Head of caudate nucleus (tissue), 42 donors: ENCODE measurements at regions of chr5 and their contacts with region 1.

Region 1: GRCh38 chr5:78972654-78973428 is 12.3 kb downstream of the ARSB start:
- DNase-seq: peak in 17 of 42 donors; percentile 10 to 66 (median 30)

Region 2: DNA sequence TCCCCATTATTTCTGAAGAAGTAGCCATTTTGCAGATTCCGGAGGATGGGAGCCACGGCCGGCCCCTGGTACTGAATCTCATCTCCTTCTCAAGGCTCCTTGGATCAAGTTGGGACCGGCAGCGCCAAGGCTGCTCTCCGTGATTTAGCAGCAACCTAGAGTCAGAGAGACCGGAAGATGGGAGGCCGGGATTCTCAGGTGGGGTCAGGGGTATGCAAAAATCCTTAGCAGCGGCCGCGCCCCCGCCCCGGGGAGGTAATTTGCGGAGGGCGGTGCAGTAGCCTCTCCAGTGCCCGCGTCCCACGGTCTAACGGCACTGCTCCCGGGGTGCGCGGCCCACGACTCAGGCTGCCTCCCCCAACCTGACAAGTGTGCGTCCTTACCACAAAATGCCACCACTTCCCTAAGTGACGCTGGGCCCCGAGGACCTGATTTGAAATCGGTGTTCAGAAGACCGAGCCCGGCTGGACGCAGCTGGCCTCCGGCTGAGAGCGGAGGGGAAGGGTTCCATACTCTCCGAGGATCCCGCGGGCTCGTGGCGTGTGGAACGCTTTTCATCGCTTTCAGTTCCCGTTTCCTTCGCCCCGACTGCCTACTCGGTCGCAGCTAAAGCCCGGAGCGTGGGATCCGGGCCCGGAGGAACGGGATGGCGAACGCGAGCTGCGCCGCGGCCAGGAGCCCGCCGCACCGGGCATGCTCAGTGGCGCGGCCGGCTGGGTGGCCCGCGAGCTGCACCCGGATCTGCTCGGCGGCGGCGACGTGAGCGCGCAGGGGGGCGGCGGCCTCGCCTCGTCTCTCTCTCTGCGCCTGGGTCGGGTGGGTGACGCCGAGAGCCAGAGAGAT is 612.8 kb before region 1 on chr5 and contains the start of gene SCAMP1:
- intact Hi-C with region 1: loop called (anchors 10 kb)
- DNase-seq: peak; percentile 71 to 96 (median 91)

Region 3: DNA sequence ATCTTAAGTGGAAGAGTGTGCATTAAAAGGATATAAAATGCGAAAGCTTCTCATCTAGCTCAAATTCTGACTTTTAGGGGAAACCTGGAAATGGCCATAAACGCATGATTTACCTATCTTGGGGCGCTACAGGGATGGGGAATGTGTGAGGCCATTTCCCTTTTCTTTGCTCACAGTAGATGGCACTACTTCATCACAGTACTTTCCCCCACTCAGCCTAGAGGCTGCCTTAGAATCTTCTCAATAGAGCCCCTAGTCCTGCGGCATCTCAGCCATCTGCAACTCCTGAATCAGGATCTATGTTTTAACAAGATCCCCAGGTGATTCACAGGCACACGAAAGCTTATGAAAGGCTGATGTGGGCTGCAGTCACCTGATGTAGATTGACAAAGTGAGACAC is 435.0 kb before region 1 on chr5:
- intact Hi-C with region 1: loop called (anchors 5 kb)
- DNase-seq: peak in 32 of 42 donors; percentile 28 to 86 (median 60)

Region 4: DNA sequence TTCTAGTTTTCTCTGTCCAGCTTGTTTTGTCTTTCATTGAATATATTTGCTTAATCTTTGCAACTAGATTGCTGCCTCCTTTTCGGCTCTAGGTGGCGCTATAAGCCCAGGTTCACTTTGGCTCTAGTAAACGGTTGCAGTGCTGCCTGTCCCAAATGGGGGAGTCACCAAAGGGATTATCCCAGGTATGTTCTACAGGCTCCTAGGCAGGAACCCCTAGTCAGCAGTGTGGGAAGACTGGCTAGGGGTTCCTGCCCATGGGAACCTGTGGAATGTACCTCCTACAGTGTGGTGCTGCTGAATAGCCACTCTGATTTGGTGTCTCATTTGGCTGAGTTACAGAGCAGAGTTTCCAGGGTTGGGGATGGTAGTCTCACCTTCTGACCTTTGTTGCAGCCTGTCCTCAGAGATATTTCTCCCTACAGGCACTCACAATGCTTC is 72.9 kb before region 1 on chr5:
- intact Hi-C with region 1: loop called (anchors 10 kb)
- DNase-seq: peak in 12 of 42 donors; percentile 19 to 69 (median 35)